Vagina (tissue), 2 donors: ENCODE measurements at regions of chrX and their contacts with region 1.

Region 1: DNA sequence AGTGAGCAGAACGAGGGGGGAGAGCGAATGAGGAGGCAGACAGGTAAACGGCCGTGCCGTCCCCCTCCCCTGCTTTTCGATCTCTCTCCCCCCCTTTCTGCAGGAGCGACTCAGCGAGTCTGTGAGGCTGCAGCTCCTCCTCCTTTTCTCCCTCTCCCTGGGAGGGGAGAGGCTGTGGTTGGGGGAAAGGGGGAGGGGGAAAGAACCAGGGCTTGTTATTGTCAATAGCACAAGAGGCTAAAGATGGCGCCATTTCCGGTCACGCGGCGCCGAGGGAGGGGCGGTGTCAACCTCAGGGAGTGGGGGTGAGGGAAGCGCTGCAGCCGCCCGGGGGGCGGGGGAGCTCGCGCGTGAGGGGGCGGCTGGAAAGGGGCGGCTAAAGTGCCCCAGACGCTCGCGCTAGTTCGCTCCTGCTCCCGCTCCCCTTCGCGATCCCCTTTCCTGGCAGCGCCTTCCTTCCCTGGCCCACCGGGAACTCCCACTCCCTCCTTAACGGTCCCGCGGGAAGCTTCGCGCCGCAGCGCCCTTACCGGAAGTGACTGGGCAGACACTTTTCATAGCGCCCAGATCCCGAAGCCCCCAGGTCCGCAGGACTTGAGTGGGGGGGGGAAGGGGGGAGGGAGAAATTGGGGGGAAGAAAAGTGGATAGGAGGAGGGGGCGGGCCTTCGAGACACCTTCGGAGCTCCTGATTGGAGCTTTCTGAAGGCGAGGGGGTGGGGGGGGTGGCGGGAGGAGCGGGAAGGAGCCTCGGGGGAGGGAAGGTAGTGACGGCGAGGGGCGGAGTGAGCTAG is at the start of gene CUL4B:
- DNase-seq: peak; percentile 96 to 98
- H3K4me3 ChIP-seq: peak within 1 kb of the TSS; percentile 52 to 61
- H3K27ac ChIP-seq: peak within 1 kb of the TSS; percentile 98
- H3K4me1 ChIP-seq: peaks cover 8% of the 10 kb centered on the region
- H3K27me3 ChIP-seq: no peaks in the 10 kb centered on the region
- CTCF ChIP-seq: no peak
- POLR2A ChIP-seq: no peak
- total RNA-seq, gene CUL4B: 31.7 TPM

Region 2: DNA sequence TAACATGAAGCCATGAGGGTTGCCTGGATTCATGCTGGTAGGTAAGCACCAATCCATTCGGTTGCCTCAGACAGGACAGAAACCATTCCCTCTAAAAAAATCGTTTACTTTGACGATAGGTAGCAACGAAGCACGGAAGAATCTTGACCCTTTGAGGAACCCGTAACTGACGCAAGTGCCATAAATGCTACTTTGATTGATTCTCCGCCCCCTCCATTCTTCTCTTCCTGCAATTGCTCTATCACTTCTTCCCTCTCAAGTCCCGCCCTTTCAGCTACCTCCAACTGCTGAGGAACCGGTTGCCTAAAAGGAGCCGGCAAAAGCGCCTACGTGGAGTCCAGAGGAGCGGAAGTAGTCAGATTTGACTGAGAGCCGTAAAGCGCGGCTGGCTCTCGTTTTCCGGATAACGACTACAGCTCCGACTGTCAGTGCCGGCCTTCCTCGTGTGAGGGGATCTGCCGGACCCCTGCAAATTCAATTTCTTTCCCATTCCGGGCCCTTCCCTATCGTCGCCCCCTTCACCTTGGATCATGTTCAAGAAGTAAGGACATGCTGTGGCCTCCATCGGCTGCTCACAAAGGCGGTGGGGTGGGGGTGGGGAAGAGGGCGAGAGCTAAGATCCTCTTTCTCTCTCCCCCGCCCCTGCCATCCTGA is 42.8 kb after region 1 on chrX and contains the start of gene MCTS1:
- intact Hi-C with region 1: loop called (anchors 5 kb)
- DNase-seq: peak in 1 of 2 donors; percentile 91
- H3K4me3 ChIP-seq: peak within 1 kb of the TSS; percentile 47 to 51
- H3K27ac ChIP-seq: peak within 1 kb of the TSS; percentile 77
- H3K4me1 ChIP-seq: peaks cover 10% of the 10 kb centered on the region
- H3K27me3 ChIP-seq: no peaks in the 10 kb centered on the region
- CTCF ChIP-seq: no peak
- POLR2A ChIP-seq: peak in 1 of 2 donors; percentile 14
- total RNA-seq, gene MCTS1: 6.1 TPM

Region 3: GRCh38 chrX:121746105-121746504 is 1185.1 kb after region 1 on chrX:
- intact Hi-C with region 1: no loop called
- DNase-seq: no peak
- H3K4me3 ChIP-seq: no peak overlapping the region
- H3K27ac ChIP-seq: no peak overlapping the region
- H3K4me1 ChIP-seq: no peaks in the 10 kb centered on the region
- H3K27me3 ChIP-seq: no peaks in the 10 kb centered on the region
- CTCF ChIP-seq: no peak
- POLR2A ChIP-seq: no peak